ENCODE measurements at regions of chr11 and their contacts with region 1.

Region 1: GRCh38 chr11:123069908-123070821 is 8.2 kb upstream of the HSPA8 start:
- DNase-seq: peak in 7 of 9 donors; percentile 54 to 81 (median 72)
- ATAC-seq: peak; percentile 88
- H3K4me3 ChIP-seq: peak overlapping the region; percentile 58
- H3K4me3 Mint-ChIP-seq: peak overlapping the region; percentile 78 to 96 (median 89)
- H3K27ac ChIP-seq: peak overlapping the region; percentile 76
- H3K27ac Mint-ChIP-seq: peak overlapping the region; percentile 95 to 99 (median 97)
- H3K4me1 ChIP-seq: peaks cover 29 to 49% of the 10 kb centered on the region in 2 donors
- H3K4me1 Mint-ChIP-seq: peaks cover 38 to 73% (median 63%) of the 10 kb centered on the region in 7 donors
- H3K27me3 ChIP-seq: no peaks in the 10 kb centered on the region
- H3K27me3 Mint-ChIP-seq: no peaks in the 10 kb centered on the region

Region 2: DNA sequence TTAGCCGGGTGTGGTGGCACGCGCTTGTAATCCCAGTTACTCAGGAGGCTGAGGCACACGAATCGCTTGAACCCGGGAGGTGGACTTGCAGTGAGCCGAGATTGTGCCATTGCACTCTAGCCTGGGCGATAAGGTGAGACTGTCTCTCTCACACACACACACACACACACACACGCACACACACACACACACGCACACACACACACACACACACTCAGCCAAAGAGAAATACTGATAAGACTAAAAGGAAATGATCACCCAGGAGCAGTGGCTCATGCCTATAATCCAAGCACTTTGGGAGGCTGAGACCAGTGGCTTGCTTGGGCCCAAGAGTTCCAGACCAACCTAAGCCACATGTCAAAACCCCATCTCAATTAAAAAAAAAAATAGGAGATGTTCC is 29.0 kb before region 1 on chr11:
- CTCF ChIA-PET with region 1: no interaction called
- POLR2A ChIA-PET with region 1: no interaction called
- intact Hi-C with region 1: no loop called
- DNase-seq: no peak
- ATAC-seq: no peak
- H3K4me3 ChIP-seq: no peak overlapping the region
- H3K4me3 Mint-ChIP-seq: no peak overlapping the region
- H3K27ac ChIP-seq: no peak overlapping the region
- H3K27ac Mint-ChIP-seq: peak overlapping the region in 1 of 9 donors; percentile 6
- H3K4me1 ChIP-seq: no peaks in the 10 kb centered on the region
- H3K4me1 Mint-ChIP-seq: no peaks in the 10 kb centered on the region
- H3K27me3 ChIP-seq: no peaks in the 10 kb centered on the region
- H3K27me3 Mint-ChIP-seq: peaks cover 0 to 5% (median 0%) of the 10 kb centered on the region in 5 donors

Region 3: DNA sequence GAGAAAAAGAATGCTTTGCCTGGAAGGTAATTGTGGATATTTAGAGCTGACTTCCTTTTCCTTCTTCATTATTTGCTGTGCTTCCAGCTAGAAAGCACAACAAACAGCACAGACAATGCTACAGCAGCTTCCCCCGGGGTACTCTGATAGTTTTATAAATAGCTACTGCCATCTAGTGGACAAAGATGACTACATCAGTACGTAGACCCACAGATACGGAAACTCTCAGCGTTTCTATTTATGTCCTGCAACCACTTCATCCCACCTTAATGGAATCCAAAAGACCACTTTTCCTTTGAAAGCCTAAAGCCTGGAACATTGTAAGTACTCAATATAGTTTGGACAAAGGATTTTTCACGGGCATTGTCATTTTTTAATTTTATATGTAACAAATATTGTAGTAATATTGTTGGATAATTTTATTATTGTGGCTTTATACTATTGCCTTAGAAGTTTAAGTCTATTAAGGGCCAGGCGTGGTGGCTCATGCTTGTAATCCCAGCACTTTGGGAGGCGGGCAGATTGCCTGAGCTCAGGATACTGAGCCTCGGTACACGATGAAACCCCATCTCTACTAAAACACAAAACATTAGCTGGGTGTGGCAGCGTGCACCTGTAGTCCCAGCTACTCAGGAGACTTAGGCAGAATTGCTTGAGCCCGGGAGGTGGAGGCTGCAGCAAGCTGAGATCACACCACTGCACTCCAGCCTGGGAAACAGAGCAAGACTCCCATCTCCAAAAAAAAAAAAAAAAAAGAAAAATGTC is 15.7 kb before region 1 on chr11:
- CTCF ChIA-PET with region 1: interaction called, 33 read pairs
- POLR2A ChIA-PET with region 1: interaction called, 167 read pairs
- intact Hi-C with region 1: no loop called
- DNase-seq: peak in 7 of 9 donors; percentile 52 to 75 (median 67)
- ATAC-seq: peak; percentile 87
- H3K4me3 ChIP-seq: peak overlapping the region; percentile 11
- H3K4me3 Mint-ChIP-seq: peak overlapping the region in 9 of 10 donors; percentile 20 to 100 (median 65)
- H3K27ac ChIP-seq: peak overlapping the region; percentile 38
- H3K27ac Mint-ChIP-seq: peak overlapping the region; percentile 69 to 100 (median 92)
- H3K4me1 ChIP-seq: peaks cover 50 to 56% of the 10 kb centered on the region in 2 donors
- H3K4me1 Mint-ChIP-seq: peaks cover 42 to 60% (median 55%) of the 10 kb centered on the region in 7 donors
- H3K27me3 ChIP-seq: no peaks in the 10 kb centered on the region
- H3K27me3 Mint-ChIP-seq: no peaks in the 10 kb centered on the region

Region 4: GRCh38 chr11:123083623-123084029 is 13.5 kb after region 1 on chr11:
- CTCF ChIA-PET with region 1: interaction called, 14 read pairs
- POLR2A ChIA-PET with region 1: interaction called, 653 read pairs
- intact Hi-C with region 1: loop called (anchors 1 kb)
- DNase-seq: peak in 4 of 9 donors; percentile 26 to 74 (median 52)
- ATAC-seq: peak; percentile 71
- H3K4me3 ChIP-seq: peak overlapping the region; percentile 17
- H3K4me3 Mint-ChIP-seq: peak overlapping the region; percentile 34 to 79 (median 68)
- H3K27ac ChIP-seq: no peak overlapping the region
- H3K27ac Mint-ChIP-seq: peak overlapping the region; percentile 51 to 98 (median 82)
- H3K4me1 ChIP-seq: peaks cover 27 to 54% of the 10 kb centered on the region in 2 donors
- H3K4me1 Mint-ChIP-seq: peaks cover 34 to 74% (median 55%) of the 10 kb centered on the region in 7 donors
- H3K27me3 ChIP-seq: no peaks in the 10 kb centered on the region
- H3K27me3 Mint-ChIP-seq: no peaks in the 10 kb centered on the region

Region 5: GRCh38 chr11:123103326-123103980 is 33.3 kb after region 1 on chr11:
- CTCF ChIA-PET with region 1: interaction called, 23 read pairs
- POLR2A ChIA-PET with region 1: interaction called, 532 read pairs
- intact Hi-C with region 1: loop called (anchors 1 kb)
- DNase-seq: peak in 7 of 9 donors; percentile 38 to 63 (median 51)
- ATAC-seq: peak; percentile 76
- H3K4me3 ChIP-seq: no peak overlapping the region
- H3K4me3 Mint-ChIP-seq: peak overlapping the region in 5 of 10 donors; percentile 14 to 63 (median 14)
- H3K27ac ChIP-seq: no peak overlapping the region
- H3K27ac Mint-ChIP-seq: peak overlapping the region in 8 of 9 donors; percentile 8 to 91 (median 51)
- H3K4me1 ChIP-seq: peaks cover 0 to 15% of the 10 kb centered on the region in 2 donors
- H3K4me1 Mint-ChIP-seq: peaks cover 16 to 43% (median 38%) of the 10 kb centered on the region in 7 donors
- H3K27me3 ChIP-seq: no peaks in the 10 kb centered on the region
- H3K27me3 Mint-ChIP-seq: peaks cover 0 to 7% (median 0%) of the 10 kb centered on the region in 5 donors

Region 6: GRCh38 chr11:123110356-123110755 is 40.2 kb after region 1 on chr11:
- CTCF ChIA-PET with region 1: interaction called, 4 read pairs
- POLR2A ChIA-PET with region 1: interaction called, 532 read pairs
- intact Hi-C with region 1: loop called in 1 of 2 experiments (anchors 1 kb)
- DNase-seq: no peak
- ATAC-seq: no peak
- H3K4me3 ChIP-seq: peak overlapping the region; percentile 21
- H3K4me3 Mint-ChIP-seq: peak overlapping the region in 7 of 10 donors; percentile 4 to 47 (median 25)
- H3K27ac ChIP-seq: no peak overlapping the region
- H3K27ac Mint-ChIP-seq: peak overlapping the region; percentile 9 to 80 (median 58)
- H3K4me1 ChIP-seq: no peaks in the 10 kb centered on the region
- H3K4me1 Mint-ChIP-seq: peaks cover 0 to 11% (median 6%) of the 10 kb centered on the region in 7 donors
- H3K27me3 ChIP-seq: no peaks in the 10 kb centered on the region
- H3K27me3 Mint-ChIP-seq: peaks cover 0 to 31% (median 0%) of the 10 kb centered on the region in 5 donors

Region 7: GRCh38 chr11:123174196-123175183 is 104.3 kb after region 1 on chr11:
- CTCF ChIA-PET with region 1: no interaction called
- POLR2A ChIA-PET with region 1: no interaction called
- intact Hi-C with region 1: no loop called
- DNase-seq: no peak
- ATAC-seq: no peak
- H3K4me3 ChIP-seq: no peak overlapping the region
- H3K4me3 Mint-ChIP-seq: no peak overlapping the region
- H3K27ac ChIP-seq: no peak overlapping the region
- H3K27ac Mint-ChIP-seq: no peak overlapping the region
- H3K4me1 ChIP-seq: no peaks in the 10 kb centered on the region
- H3K4me1 Mint-ChIP-seq: no peaks in the 10 kb centered on the region
- H3K27me3 ChIP-seq: no peaks in the 10 kb centered on the region
- H3K27me3 Mint-ChIP-seq: peaks cover 0 to 10% (median 0%) of the 10 kb centered on the region in 5 donors

Region 8: GRCh38 chr11:123233280-123233974 is 163.3 kb after region 1 on chr11:
- CTCF ChIA-PET with region 1: no interaction called
- POLR2A ChIA-PET with region 1: no interaction called
- intact Hi-C with region 1: no loop called
- DNase-seq: peak in 1 of 9 donors; percentile 6
- ATAC-seq: peak; percentile 63
- H3K4me3 ChIP-seq: peak overlapping the region; percentile 26
- H3K4me3 Mint-ChIP-seq: peak overlapping the region in 9 of 10 donors; percentile 21 to 72 (median 48)
- H3K27ac ChIP-seq: no peak overlapping the region
- H3K27ac Mint-ChIP-seq: peak overlapping the region; percentile 4 to 93 (median 80)
- H3K4me1 ChIP-seq: peaks cover 12 to 17% of the 10 kb centered on the region in 2 donors
- H3K4me1 Mint-ChIP-seq: peaks cover 14 to 40% (median 17%) of the 10 kb centered on the region in 7 donors
- H3K27me3 ChIP-seq: no peaks in the 10 kb centered on the region
- H3K27me3 Mint-ChIP-seq: peaks cover 0 to 18% (median 0%) of the 10 kb centered on the region in 5 donors

Region 9: GRCh38 chr11:123624974-123625373 is 554.8 kb after region 1 on chr11:
- CTCF ChIA-PET with region 1: no interaction called
- POLR2A ChIA-PET with region 1: no interaction called
- intact Hi-C with region 1: no loop called
- DNase-seq: no peak
- ATAC-seq: no peak
- H3K4me3 ChIP-seq: no peak overlapping the region
- H3K4me3 Mint-ChIP-seq: no peak overlapping the region
- H3K27ac ChIP-seq: no peak overlapping the region
- H3K27ac Mint-ChIP-seq: peak overlapping the region in 1 of 9 donors; percentile 34
- H3K4me1 ChIP-seq: no peaks in the 10 kb centered on the region
- H3K4me1 Mint-ChIP-seq: no peaks in the 10 kb centered on the region
- H3K27me3 ChIP-seq: no peaks in the 10 kb centered on the region
- H3K27me3 Mint-ChIP-seq: peaks cover 0 to 2% (median 0%) of the 10 kb centered on the region in 5 donors

Region 10: GRCh38 chr11:124739479-124740276 is 1669.5 kb after region 1 on chr11 and contains the start of gene NRGN:
- CTCF ChIA-PET with region 1: no interaction called
- POLR2A ChIA-PET with region 1: no interaction called
- intact Hi-C with region 1: loop called in 1 of 2 experiments (anchors 10 kb)
- DNase-seq: peak; percentile 64 to 84 (median 77)
- ATAC-seq: peak; percentile 94
- H3K4me3 ChIP-seq: peak within 1 kb of the TSS; percentile 63
- H3K4me3 Mint-ChIP-seq: peak within 1 kb of the TSS; percentile 78 to 90 (median 86)
- H3K27ac ChIP-seq: peak within 1 kb of the TSS; percentile 38
- H3K27ac Mint-ChIP-seq: peak within 1 kb of the TSS in 8 of 9 donors; percentile 25 to 75 (median 56)
- H3K4me1 ChIP-seq: peaks cover 0 to 5% of the 10 kb centered on the region in 2 donors
- H3K4me1 Mint-ChIP-seq: peaks cover 18 to 33% (median 19%) of the 10 kb centered on the region in 7 donors
- H3K27me3 ChIP-seq: no peaks in the 10 kb centered on the region
- H3K27me3 Mint-ChIP-seq: peaks cover 0 to 65% (median 9%) of the 10 kb centered on the region in 5 donors
- total RNA-seq, gene NRGN: 1.2 to 48.7 (median 4.9) TPM

Measured in naive thymus-derived CD4-positive, alpha-beta T cell (primary cell).